WTC11 (cell line): ENCODE measurements at regions of chr20 and their contacts with region 1.

Region 1: DNA sequence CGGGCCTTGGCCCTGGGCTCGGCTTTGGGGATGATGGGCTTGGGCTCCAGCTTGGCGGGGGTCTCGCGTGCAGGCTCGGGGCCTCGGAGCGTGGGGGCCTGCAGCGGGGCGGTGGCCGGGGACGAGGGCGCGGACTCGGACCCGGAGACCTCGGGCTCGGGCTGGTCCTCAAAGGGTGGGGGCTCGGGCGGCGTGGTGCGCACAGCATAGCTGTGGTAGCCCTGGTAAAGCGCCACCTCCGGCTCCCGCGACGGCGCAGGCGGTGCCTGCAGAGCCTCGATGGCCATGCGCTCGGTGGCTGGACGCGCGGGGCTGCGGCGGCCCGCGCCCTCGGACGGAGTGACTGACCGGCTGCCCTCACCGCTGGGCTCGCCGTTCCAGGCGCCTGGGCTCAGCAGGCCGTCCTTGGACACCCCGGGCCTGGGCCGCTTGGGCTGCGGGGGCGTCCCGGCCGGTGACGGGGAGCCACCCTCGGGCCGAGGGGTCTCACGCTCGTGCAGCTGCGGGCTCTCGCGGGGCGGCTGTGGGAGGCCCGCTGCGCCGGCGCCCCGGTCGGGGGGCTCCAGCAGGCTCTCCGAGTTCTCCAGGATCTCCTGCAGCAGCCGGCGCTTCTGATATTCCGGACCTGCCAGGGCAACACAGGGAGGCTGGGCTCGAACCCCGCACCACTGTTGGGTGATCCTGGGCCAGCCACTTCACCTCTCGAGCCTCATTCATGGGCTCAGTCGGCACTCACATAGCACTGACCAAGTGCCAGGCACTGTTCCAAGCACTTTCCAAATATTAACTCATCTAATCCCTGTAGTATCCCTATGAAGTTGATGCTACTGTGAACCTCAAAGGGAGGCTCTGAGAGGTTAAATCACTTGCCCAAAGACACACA is 71.0 kb downstream of the JPH2 start:
- DNase-seq: no peak
- ATAC-seq: no peak
- H3K4me3 Mint-ChIP-seq: no peak overlapping the region
- H3K27ac Mint-ChIP-seq: no peak overlapping the region
- H3K4me1 Mint-ChIP-seq: 0 out of 2 replicates have a peak, but pooled peaks cover 5% of the 10 kb centered on the region
- H3K27me3 Mint-ChIP-seq: no peaks in the 10 kb centered on the region; the same call in 1 of the 2 replicates
- CTCF ChIP-seq: no peak

Region 2: DNA sequence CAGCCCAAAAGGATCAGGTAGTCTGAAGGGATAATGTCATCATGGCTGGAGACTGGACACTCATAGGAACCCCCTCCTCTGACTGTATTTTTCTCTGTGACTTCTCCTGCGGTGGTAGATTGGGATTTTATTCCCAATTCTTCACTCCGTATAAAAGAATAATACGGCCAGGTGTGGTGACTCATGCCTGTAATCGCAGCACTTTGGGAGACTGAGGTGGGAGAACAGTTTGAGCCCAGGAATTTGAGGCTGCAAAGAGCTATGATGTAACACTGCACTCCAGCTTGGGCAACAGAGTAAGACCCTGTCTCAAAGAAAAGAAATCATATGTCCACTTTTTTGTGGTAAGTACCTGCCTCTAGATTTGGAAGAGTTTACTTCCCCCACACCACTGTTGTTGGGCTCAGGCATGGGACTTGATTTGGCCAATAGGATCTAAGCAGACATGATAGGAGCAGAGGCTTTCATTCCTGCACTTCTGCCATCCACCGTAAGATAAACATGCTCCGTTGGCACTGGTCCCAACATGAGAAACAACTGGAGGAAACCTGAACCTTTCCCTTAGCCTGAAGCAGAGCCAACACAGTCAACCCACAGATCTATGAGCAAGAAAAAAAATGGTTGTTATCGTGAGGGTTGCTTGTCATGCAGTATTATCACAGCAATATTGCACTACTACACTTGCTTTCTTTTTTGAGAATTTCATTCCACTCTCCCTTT is 11.0 kb before region 1 on chr20:
- CTCF ChIA-PET with region 1: no interaction called
- POLR2A ChIA-PET with region 1: no interaction called
- DNase-seq: no peak
- ATAC-seq: no peak
- H3K4me3 Mint-ChIP-seq: no peak overlapping the region
- H3K27ac Mint-ChIP-seq: no peak overlapping the region
- H3K4me1 Mint-ChIP-seq: no peaks in the 10 kb centered on the region
- H3K27me3 Mint-ChIP-seq: peaks cover 16% of the 10 kb centered on the region
- CTCF ChIP-seq: no peak

Region 3: DNA sequence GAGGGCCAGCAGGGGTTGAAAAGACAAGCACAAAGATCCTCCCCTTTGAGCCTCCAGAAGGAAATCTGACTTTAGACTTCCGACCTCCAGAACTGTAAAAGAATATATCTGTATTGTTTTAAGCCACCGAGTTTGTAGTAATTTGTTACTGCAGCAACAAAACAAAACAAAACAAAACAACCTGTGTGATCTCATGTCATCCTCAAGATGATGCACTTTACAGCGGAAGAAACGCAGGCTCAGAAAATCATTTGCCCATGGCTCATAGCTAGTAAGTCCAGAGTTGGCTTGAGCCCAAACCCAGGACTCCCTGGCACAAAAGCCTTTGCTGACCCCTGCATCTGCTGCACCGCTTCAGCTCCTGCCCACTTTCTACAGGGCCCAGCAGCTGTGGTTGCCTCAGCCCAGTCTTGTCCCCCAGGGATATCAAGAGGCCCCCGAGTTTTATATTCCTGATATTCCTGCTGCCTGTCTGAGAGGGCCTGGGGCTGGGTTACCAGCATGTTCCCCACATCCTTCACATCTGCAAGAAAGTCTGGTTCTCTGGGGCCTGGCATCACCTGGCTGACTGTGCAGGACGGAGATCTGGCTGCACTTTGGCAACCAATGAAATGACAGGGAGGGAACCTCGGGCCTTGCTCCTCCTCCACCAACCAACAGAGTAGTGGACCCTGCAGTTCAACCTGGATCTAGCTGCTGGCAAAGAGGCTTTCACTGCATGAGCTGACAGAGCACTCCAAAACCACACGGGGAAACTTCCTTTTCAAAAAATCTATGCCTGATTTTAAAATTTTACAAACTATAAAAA is 14.1 kb after region 1 on chr20:
- CTCF ChIA-PET with region 1: interaction called, 29 read pairs
- POLR2A ChIA-PET with region 1: no interaction called
- DNase-seq: no peak
- ATAC-seq: peak; percentile 43; the same call in 1 of the 2 replicates
- H3K4me3 Mint-ChIP-seq: no peak overlapping the region
- H3K27ac Mint-ChIP-seq: no peak overlapping the region; the same call in 1 of the 2 replicates
- H3K4me1 Mint-ChIP-seq: peaks cover 5% of the 10 kb centered on the region; the same call in 1 of the 2 replicates
- H3K27me3 Mint-ChIP-seq: no peaks in the 10 kb centered on the region
- CTCF ChIP-seq: no peak

Region 4: GRCh38 chr20:44180814-44181213 is 64.8 kb after region 1 on chr20:
- CTCF ChIA-PET with region 1: interaction called, 18 read pairs
- POLR2A ChIA-PET with region 1: no interaction called
- DNase-seq: peak; percentile 23
- ATAC-seq: peak; percentile 72
- H3K4me3 Mint-ChIP-seq: no peak overlapping the region
- H3K27ac Mint-ChIP-seq: no peak overlapping the region
- H3K4me1 Mint-ChIP-seq: peaks cover 13% of the 10 kb centered on the region
- H3K27me3 Mint-ChIP-seq: no peaks in the 10 kb centered on the region
- CTCF ChIP-seq: no peak

Region 5: GRCh38 chr20:44196271-44196670 is 80.3 kb after region 1 on chr20:
- CTCF ChIA-PET with region 1: interaction called, 368 read pairs
- POLR2A ChIA-PET with region 1: no interaction called
- DNase-seq: no peak
- ATAC-seq: no peak
- H3K4me3 Mint-ChIP-seq: no peak overlapping the region
- H3K27ac Mint-ChIP-seq: no peak overlapping the region
- H3K4me1 Mint-ChIP-seq: no peaks in the 10 kb centered on the region
- H3K27me3 Mint-ChIP-seq: no peaks in the 10 kb centered on the region; the same call in 1 of the 2 replicates
- CTCF ChIP-seq: no peak

Region 6: GRCh38 chr20:44222633-44223368 is 106.8 kb after region 1 on chr20:
- CTCF ChIA-PET with region 1: interaction called, 19 read pairs
- POLR2A ChIA-PET with region 1: no interaction called
- DNase-seq: peak; percentile 64
- ATAC-seq: peak; percentile 94
- H3K4me3 Mint-ChIP-seq: no peak overlapping the region
- H3K27ac Mint-ChIP-seq: no peak overlapping the region; the same call in 1 of the 2 replicates
- H3K4me1 Mint-ChIP-seq: peaks cover 12% of the 10 kb centered on the region
- H3K27me3 Mint-ChIP-seq: no peaks in the 10 kb centered on the region
- CTCF ChIP-seq: no peak; the same call in 1 of the 2 replicates